ENCODE measurements at regions of chr14 and their contacts with region 1.

Region 1: DNA sequence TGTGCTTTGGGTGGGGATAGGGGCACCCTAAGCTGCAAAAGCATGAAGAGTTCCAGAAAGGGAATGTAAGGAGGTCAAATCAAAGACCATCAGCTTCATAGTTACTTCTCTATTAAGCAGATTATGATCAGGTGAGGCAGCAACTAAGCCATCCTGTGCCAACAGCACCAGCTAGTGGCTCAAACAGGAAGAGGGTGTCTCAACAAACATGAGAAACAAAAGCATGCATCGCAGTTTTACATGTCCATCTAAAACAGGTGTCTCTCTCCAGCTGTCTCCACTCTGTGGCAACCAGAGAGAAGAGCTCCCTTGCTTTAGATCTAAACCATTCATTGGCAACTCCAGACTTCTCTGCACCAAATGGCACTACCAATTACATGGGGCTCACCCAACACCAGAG is 52.9 kb downstream of the ACTN1 start:
- DNase-seq: no peak
- H3K4me3 ChIP-seq: no peak overlapping the region
- H3K27ac ChIP-seq: no peak overlapping the region
- H3K4me1 ChIP-seq: peaks cover 41% of the 10 kb centered on the region
- H3K27me3 ChIP-seq: no peaks in the 10 kb centered on the region
- CTCF ChIP-seq: peak; percentile 64 to 78

Region 2: DNA sequence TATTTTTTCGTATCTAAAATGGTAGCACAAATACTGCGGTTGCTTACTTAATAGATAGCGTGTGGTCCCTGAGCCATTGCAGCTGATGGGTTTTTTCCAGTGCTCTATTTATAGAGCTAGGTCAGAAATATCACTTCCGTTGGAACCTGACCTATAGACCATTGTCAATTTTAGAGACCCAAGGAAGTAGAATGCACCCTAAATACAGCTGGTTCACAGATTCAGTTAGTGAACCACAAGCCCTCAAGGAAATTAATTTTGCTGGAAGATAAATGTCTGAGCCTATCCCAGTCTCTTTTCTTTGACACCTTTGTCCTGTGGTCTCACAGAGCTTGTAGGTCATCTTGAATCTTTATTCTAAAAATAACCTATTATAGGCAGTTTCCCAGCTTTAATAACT is 524.4 kb before region 1 on chr14:
- CTCF ChIA-PET with region 1: no interaction called
- dilution Hi-C with region 1: no loop called
- in situ Hi-C with region 1: no loop called
- intact Hi-C with region 1: no loop called
- DNase-seq: no peak
- H3K4me3 ChIP-seq: no peak overlapping the region
- H3K27ac ChIP-seq: peak overlapping the region; percentile 83
- H3K4me1 ChIP-seq: peaks cover 77% of the 10 kb centered on the region
- H3K27me3 ChIP-seq: no peaks in the 10 kb centered on the region
- CTCF ChIP-seq: no peak

Region 3: GRCh38 chr14:69043596-69044260 is 117.5 kb after region 1 on chr14:
- CTCF ChIA-PET with region 1: interaction called, 4 read pairs
- dilution Hi-C with region 1: no loop called
- in situ Hi-C with region 1: no loop called
- intact Hi-C with region 1: loop called (anchors 5 kb)
- DNase-seq: no peak
- H3K4me3 ChIP-seq: no peak overlapping the region
- H3K27ac ChIP-seq: no peak overlapping the region
- H3K4me1 ChIP-seq: peaks cover 26% of the 10 kb centered on the region
- H3K27me3 ChIP-seq: no peaks in the 10 kb centered on the region
- CTCF ChIP-seq: no peak